Endothelial cell of umbilical vein (primary cell): ENCODE measurements at regions of chr4 and their contacts with region 1.

Region 1: DNA sequence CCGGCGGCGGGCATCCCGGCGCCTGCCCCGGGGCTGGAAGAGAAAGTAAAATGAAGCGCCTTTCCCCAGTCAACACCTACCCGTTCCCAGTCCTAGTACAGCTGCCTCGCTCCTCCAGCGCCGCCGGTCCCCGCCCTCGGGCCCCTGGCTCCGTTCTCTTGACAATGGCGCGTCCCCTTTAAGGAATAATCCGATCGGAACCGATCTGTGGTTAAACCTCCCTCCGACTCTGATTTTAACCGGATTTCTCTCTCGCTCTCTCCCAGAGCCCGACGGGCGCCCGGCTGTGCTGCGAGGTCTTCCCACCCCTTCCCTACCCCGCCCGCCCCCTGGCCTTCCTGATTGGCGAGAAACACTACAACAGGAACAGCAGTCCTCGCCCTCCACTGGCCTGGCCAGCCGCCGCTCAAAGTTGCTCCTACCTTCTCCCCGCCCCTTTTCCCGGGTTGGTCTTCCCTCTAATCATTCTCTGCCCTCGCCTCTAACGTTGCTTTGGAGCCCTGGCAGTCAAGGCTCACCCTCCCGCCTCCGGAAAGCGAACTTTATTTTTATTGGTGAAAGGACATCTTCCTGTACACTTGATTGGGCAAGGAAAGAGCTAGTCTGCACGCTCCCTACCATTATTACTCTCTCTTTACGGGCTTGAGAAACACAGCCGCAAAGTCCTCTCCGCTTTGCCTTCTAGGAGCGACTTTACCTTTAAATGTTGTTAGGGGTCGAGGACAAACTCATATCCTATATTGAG is at the start of gene FRYL:
- DNase-seq: peak; percentile 100
- H3K4me3 ChIP-seq: peak within 1 kb of the TSS; percentile 90 to 95 (median 95)
- H3K27ac ChIP-seq: peak within 1 kb of the TSS; percentile 92
- H3K4me1 ChIP-seq: peaks cover 26% of the 10 kb centered on the region
- H3K27me3 ChIP-seq: no peaks in the 10 kb centered on the region
- CTCF ChIP-seq: no peak
- POLR2A ChIP-seq: peak; percentile 48
- total RNA-seq, gene FRYL: 79.8 and 84.9 TPM in 2 replicates

Region 2: GRCh38 chr4:48396043-48396442 is 384.1 kb before region 1 on chr4:
- CTCF ChIA-PET with region 1: no interaction called
- POLR2A ChIA-PET with region 1: no interaction called
- dilution Hi-C with region 1: no loop called
- intact Hi-C with region 1: no loop called
- DNase-seq: no peak
- H3K4me3 ChIP-seq: no peak overlapping the region
- H3K27ac ChIP-seq: no peak overlapping the region
- H3K4me1 ChIP-seq: no peaks in the 10 kb centered on the region
- H3K27me3 ChIP-seq: no peaks in the 10 kb centered on the region
- CTCF ChIP-seq: no peak
- POLR2A ChIP-seq: no peak

Region 3: DNA sequence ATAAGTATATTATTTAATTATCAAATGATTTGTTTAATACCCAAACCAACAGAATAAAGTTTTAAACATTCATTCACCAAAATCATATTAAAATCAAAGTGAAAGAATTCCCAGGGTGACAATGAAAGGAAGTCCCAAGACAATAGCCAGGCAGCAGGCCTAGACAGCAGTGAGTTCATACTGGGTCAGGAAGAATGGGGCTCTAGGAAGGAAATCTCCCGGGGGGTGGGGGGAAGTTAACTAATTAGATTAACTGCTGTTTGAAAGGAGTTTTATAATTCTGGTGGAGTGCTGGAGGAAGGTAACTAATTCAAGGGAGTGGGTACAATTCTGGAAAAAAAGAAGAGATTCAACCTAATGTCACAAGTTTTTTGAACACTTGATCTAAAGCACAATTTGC is 186.0 kb before region 1 on chr4:
- CTCF ChIA-PET with region 1: no interaction called
- POLR2A ChIA-PET with region 1: no interaction called
- dilution Hi-C with region 1: no loop called
- intact Hi-C with region 1: loop called (anchors 5 kb)
- DNase-seq: peak; percentile 88
- H3K4me3 ChIP-seq: peak overlapping the region in 1 of 3 experiments; percentile 33
- H3K27ac ChIP-seq: peak overlapping the region; percentile 31
- H3K4me1 ChIP-seq: peaks cover 47% of the 10 kb centered on the region
- H3K27me3 ChIP-seq: no peaks in the 10 kb centered on the region
- CTCF ChIP-seq: no peak
- POLR2A ChIP-seq: no peak

Region 4: DNA sequence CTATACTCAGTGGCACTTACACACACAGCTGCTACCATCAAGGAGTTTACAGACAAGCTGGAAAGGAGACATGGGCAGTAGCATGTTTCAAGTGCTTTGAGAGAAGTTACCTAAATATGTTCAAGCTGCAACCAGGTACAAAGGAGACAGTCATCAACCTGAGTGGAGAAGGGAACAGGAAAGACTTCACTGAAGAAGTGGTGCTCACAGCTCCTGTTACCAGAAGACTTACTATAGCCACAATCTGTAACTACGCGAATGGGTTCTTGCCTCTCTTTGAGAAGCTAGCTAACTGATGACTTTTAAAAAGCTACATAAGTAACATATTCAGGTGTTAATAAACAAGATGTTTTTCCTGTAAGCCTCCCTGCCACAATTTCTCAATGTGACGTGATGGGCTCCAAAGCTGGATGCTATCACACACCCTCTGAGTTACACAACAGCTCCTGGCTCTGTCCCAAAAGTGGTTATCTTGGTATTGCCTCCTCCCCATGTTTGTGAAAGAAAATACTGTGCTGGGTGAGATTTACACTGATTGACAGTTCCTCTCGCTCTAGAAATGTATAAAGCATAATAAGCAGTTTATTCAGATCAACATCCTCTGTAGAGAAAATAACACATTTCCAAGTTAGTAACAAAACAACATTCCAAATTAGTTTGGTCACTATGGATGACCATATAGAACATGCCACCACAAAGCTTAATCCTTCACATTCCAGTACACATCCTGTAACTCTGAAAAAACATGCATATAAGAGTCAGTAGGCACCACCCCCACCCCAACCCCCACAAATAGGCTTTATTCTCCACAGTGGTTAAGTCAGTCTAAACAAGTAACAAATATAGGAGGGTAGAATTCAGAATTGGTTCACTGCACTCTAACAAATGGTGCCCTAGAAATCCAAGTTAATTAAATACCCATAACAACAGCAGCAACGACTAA is 81.9 kb before region 1 on chr4:
- CTCF ChIA-PET with region 1: interaction called, 4 read pairs
- POLR2A ChIA-PET with region 1: no interaction called
- dilution Hi-C with region 1: no loop called
- intact Hi-C with region 1: loop called (anchors 1 kb)
- DNase-seq: peak; percentile 87
- H3K4me3 ChIP-seq: no peak overlapping the region
- H3K27ac ChIP-seq: peak overlapping the region; percentile 85
- H3K4me1 ChIP-seq: peaks cover 28% of the 10 kb centered on the region
- H3K27me3 ChIP-seq: no peaks in the 10 kb centered on the region
- CTCF ChIP-seq: no peak
- POLR2A ChIP-seq: no peak

Region 5: GRCh38 chr4:48748949-48749596 is 31.1 kb before region 1 on chr4:
- CTCF ChIA-PET with region 1: interaction called, 6 read pairs
- POLR2A ChIA-PET with region 1: interaction called, 10 read pairs
- dilution Hi-C with region 1: no loop called
- intact Hi-C with region 1: no loop called
- DNase-seq: no peak
- H3K4me3 ChIP-seq: no peak overlapping the region
- H3K27ac ChIP-seq: no peak overlapping the region
- H3K4me1 ChIP-seq: peaks cover 29% of the 10 kb centered on the region
- H3K27me3 ChIP-seq: no peaks in the 10 kb centered on the region
- CTCF ChIP-seq: no peak
- POLR2A ChIP-seq: no peak

Region 6: GRCh38 chr4:48766131-48766792 is 13.9 kb before region 1 on chr4:
- CTCF ChIA-PET with region 1: no interaction called
- POLR2A ChIA-PET with region 1: no interaction called
- dilution Hi-C with region 1: no loop called
- intact Hi-C with region 1: no loop called
- DNase-seq: no peak
- H3K4me3 ChIP-seq: no peak overlapping the region
- H3K27ac ChIP-seq: no peak overlapping the region
- H3K4me1 ChIP-seq: peaks cover 5% of the 10 kb centered on the region
- H3K27me3 ChIP-seq: no peaks in the 10 kb centered on the region
- CTCF ChIP-seq: no peak
- POLR2A ChIP-seq: no peak

Region 7: GRCh38 chr4:48830706-48831531 is 50.7 kb after region 1 on chr4 and contains the start of gene OCIAD1:
- CTCF ChIA-PET with region 1: no interaction called
- POLR2A ChIA-PET with region 1: no interaction called
- dilution Hi-C with region 1: no loop called
- intact Hi-C with region 1: loop called (anchors 1 kb)
- DNase-seq: peak; percentile 99
- H3K4me3 ChIP-seq: peak within 1 kb of the TSS; percentile 64 to 96 (median 66)
- H3K27ac ChIP-seq: peak within 1 kb of the TSS; percentile 95
- H3K4me1 ChIP-seq: peaks cover 10% of the 10 kb centered on the region
- H3K27me3 ChIP-seq: no peaks in the 10 kb centered on the region
- CTCF ChIP-seq: no peak
- POLR2A ChIP-seq: peak; percentile 81
- total RNA-seq, gene OCIAD1: 99.9 and 101 TPM in 2 replicates